ENCODE measurements at regions of chr11 and their contacts with region 1.

Region 1: GRCh38 chr11:111878849-111879636 is at the starts of genes CFAP68 and FDXACB1:
- DNase-seq: peak; percentile 99
- H3K4me3 ChIP-seq: peak within 1 kb of the TSS; percentile 65
- H3K27ac ChIP-seq: peak within 1 kb of the TSS; percentile 96
- H3K4me1 ChIP-seq: peaks cover 4% of the 10 kb centered on the region
- H3K27me3 ChIP-seq: no peaks in the 10 kb centered on the region
- CTCF ChIP-seq: peak; percentile 99
- total RNA-seq, gene CFAP68: 16.5 and 16.9 TPM in 2 replicates
- total RNA-seq, gene FDXACB1: 5.4 TPM in 2 replicates

Region 2: DNA sequence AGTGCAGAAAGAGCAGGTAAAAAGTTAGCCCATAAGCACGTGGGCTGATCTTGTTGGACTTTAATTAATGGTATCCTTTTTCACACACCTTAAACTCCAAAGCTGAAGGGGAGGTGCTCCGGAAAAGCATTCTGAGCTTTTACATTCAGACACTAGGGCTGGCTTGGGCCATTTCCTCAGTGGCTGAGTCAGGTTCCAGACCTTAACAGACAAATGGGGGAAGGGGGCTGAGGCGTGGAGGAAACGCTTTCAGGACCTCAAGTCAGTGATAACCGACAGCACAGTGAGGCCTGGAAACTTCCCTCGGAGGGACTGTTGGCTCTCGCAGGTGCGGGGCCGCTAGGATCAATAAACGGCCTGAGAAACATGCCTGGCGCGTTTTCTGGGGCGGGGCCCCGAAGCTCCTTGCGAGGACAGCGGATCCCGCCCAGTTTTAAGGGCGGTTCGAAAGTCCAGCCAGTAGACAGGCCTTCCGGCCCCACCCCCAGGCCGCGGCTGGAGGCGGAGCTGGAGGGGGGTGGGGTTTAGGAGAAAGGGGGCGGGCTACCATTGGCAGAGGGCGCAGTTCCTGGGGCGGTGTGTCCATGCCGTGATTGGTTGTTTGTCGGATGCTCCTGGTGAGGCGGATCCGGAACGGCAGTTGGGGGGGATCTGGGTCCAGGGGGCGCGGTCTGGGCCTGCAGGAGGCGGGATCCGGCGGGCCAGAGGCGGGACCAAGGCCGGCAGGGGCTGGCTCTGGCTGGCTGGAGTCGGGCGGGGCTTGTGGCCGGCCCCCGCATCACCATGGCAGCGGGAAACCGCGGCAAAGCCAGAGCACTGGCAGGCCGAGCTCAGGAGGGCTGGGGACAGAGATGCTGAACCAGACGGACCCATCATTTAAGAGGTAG is 47.7 kb after region 1 on chr11:
- CTCF ChIA-PET with region 1: no interaction called
- POLR2A ChIA-PET with region 1: no interaction called
- intact Hi-C with region 1: no loop called
- DNase-seq: peak; percentile 98
- H3K4me3 ChIP-seq: peak overlapping the region; percentile 41
- H3K27ac ChIP-seq: peak overlapping the region; percentile 67
- H3K4me1 ChIP-seq: peaks cover 34% of the 10 kb centered on the region
- H3K27me3 ChIP-seq: no peaks in the 10 kb centered on the region
- CTCF ChIP-seq: no peak

Region 3: DNA sequence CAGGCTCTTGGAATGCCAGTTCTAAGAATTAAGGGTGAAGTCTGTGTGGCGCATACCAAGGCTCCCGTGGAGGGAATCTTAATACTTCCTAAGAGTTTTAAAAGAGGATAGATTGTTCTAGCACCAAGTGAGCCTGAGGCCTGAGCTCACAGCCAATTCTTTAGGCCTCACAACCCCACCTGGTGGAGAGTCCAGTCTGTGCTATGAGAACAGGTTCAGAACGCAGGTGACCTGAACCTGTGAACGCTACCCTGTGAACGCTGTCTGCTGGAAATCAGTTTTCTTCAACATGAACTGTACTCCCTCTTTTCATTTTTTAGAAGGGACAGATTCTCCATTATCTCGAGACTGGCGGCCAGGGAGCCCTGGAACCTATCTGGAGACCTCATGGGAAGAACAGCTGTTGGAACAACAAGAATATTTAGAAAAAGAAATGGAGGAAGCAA is 103.0 kb after region 1 on chr11:
- CTCF ChIA-PET with region 1: no interaction called
- POLR2A ChIA-PET with region 1: no interaction called
- intact Hi-C with region 1: loop called (anchors 5 kb)
- DNase-seq: peak; percentile 26
- H3K4me3 ChIP-seq: no peak overlapping the region
- H3K27ac ChIP-seq: no peak overlapping the region
- H3K4me1 ChIP-seq: peaks cover 23% of the 10 kb centered on the region
- H3K27me3 ChIP-seq: no peaks in the 10 kb centered on the region
- CTCF ChIP-seq: peak; percentile 62

Region 4: DNA sequence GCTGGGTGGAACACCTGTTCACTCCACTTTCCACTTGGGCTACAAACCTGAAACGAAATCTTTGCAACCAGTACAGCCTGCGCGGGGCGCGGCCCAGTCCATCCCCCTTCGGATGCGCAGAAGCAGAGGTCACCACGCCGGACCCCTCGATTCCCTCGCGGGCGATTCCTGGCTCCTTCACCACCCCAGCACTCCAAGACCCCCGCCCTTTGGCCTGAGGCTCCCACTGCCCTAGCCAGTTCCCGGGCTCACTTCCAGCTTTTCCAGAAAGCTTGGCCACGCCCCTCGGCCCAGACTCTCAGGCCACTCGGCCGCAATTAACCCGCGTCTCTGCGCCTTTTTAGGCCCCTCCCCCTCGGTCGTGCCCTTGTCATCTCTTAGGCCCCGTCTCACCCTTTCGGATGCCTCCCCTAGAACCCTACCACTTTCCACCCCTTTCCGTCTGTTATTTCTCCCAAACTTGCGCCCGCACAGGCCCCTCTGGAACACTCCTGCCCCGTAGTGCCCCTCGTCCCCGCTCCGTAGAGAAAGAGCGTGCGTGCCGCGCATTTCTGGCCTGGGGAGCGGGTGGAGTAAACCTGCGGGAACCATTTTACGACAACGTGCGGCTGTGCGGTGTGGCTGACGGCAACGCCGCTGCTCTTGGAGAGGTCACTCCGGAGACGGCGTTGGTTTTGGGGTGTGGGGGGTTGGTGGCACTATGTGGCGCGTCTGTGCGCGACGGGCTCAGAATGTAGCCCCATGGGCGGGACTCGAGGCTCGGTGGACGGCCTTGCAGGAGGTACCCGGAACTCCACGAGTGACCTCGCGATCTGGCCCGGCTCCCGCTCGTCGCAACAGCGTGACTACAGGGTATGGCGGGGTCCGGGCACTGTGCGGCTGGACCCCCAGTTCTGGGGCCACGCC is 146.0 kb after region 1 on chr11 and contains the start of gene DLAT:
- CTCF ChIA-PET with region 1: no interaction called
- POLR2A ChIA-PET with region 1: no interaction called
- intact Hi-C with region 1: loop called (anchors 10 kb)
- DNase-seq: peak; percentile 95
- H3K4me3 ChIP-seq: peak within 1 kb of the TSS; percentile 77
- H3K27ac ChIP-seq: peak within 1 kb of the TSS; percentile 88
- H3K4me1 ChIP-seq: peaks cover 13% of the 10 kb centered on the region
- H3K27me3 ChIP-seq: no peaks in the 10 kb centered on the region
- CTCF ChIP-seq: no peak
- total RNA-seq, gene DLAT: 90.8 and 94.1 TPM in 2 replicates

Region 5: DNA sequence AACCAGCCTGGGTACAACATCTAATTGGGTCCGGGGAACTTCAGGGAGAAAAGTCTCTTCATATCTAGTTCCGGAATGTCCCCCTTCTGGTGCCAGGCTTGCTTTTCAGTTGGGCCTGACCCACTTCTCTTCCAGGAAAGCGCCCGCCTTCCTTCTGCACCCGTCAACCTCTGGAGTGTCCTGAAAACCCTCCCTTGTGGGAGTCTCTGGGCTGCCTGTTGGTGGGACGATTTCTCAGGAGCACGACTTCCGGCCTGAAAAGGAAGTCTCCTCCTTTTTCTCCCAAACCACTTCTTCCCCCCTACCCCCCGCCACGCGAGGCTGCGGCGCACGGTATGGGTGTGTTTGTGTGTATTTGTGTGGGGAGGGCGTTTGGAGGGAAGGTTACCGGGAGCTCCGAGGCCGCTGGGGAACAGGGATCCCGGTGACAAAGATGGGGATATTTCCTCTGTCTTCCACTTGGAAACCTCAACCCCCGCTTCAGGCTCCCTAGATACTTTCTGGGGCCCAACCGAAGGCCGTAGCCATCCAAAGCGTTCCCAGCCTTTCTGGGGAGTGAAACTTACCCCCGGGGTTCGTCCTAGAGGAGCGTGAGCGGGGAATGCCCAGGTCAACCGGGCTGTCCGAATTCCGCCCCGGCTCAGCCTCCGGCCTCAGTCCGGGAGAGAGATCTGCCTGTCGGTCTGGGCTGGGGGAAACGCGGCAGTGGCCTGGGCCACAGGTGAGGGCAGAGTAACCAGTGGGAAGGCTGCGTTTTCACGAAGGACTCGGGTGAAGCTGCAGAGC is 195.2 kb after region 1 on chr11 and contains the start of gene NKAPD1:
- CTCF ChIA-PET with region 1: no interaction called
- POLR2A ChIA-PET with region 1: no interaction called
- intact Hi-C with region 1: loop called (anchors 5 kb)
- DNase-seq: peak; percentile 96
- H3K4me3 ChIP-seq: peak within 1 kb of the TSS; percentile 93
- H3K27ac ChIP-seq: peak within 1 kb of the TSS; percentile 98
- H3K4me1 ChIP-seq: peaks cover 11% of the 10 kb centered on the region
- H3K27me3 ChIP-seq: no peaks in the 10 kb centered on the region
- CTCF ChIP-seq: 0 out of 2 replicates have a peak, but pooled peaks have one; percentile 16
- total RNA-seq, gene NKAPD1: 30.4 and 32.8 TPM in 2 replicates

Region 6: DNA sequence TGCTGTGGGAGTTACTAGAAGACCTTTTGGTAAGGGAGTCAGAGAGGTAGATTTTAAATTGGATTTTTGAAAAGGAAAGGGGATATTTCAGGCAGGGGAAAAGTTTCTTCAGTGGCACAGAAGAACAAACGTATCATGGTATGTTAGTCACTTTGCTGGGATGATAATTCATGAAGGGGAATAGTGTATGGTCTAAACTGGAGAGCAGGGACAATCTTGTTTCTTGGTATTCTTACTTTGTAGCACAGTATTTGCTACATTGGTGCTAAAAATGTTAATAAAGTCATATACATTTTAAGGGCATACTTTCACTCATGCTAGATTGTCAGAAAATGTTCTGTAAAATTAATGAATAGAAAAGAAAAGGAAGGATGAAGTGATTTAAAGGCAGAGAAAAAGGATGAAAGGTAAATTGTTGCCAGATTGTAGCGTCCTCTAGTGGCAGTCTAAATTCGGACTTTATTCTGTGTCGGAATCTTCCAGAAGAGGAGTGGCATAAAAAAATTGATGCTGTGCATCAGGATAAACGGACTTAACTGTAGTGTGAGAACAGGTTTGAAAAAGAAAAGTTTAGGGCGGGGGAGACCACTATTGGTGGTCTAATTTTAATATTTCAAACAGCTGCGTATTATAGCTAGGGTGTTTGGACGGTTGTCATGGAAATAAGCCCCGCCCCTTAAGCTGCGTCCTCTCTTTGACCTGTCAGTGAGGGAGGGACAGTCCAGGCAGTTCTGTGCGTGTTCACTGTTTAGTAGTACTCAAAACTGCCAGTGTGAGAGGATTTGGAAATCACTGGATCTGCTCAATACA is 296.0 kb after region 1 on chr11 and contains the start of gene BCO2:
- CTCF ChIA-PET with region 1: no interaction called
- POLR2A ChIA-PET with region 1: no interaction called
- intact Hi-C with region 1: loop called (anchors 10 kb)
- DNase-seq: peak; percentile 77
- H3K4me3 ChIP-seq: peak within 1 kb of the TSS; percentile 30
- H3K27ac ChIP-seq: no peak within 1 kb of the TSS
- H3K4me1 ChIP-seq: peaks cover 14% of the 10 kb centered on the region
- H3K27me3 ChIP-seq: no peaks in the 10 kb centered on the region
- CTCF ChIP-seq: peak; percentile 98
- total RNA-seq, gene BCO2: 2.5 and 2.6 TPM in 2 replicates

Measured in A673 (cell line).